ENCODE measurements at regions of chr7 and their contacts with region 1.

Region 1: GRCh38 chr7:150737265-150738055 is at the start of gene GIMAP5:
- DNase-seq: no peak
- ATAC-seq: peak; percentile 56
- total RNA-seq, gene GIMAP5: 9.0 TPM

Region 2: GRCh38 chr7:150675714-150676113 is 61.7 kb before region 1 on chr7:
- intact Hi-C with region 1: loop called (anchors 5 kb)
- DNase-seq: no peak
- ATAC-seq: no peak

Region 3: GRCh38 chr7:150716368-150716767 is 21.1 kb before region 1 on chr7 and contains the start of gene GIMAP1:
- intact Hi-C with region 1: loop called (anchors 2 kb)
- DNase-seq: peak; percentile 70
- ATAC-seq: peak; percentile 82
- total RNA-seq, gene GIMAP1: 5.8 TPM

Region 4: DNA sequence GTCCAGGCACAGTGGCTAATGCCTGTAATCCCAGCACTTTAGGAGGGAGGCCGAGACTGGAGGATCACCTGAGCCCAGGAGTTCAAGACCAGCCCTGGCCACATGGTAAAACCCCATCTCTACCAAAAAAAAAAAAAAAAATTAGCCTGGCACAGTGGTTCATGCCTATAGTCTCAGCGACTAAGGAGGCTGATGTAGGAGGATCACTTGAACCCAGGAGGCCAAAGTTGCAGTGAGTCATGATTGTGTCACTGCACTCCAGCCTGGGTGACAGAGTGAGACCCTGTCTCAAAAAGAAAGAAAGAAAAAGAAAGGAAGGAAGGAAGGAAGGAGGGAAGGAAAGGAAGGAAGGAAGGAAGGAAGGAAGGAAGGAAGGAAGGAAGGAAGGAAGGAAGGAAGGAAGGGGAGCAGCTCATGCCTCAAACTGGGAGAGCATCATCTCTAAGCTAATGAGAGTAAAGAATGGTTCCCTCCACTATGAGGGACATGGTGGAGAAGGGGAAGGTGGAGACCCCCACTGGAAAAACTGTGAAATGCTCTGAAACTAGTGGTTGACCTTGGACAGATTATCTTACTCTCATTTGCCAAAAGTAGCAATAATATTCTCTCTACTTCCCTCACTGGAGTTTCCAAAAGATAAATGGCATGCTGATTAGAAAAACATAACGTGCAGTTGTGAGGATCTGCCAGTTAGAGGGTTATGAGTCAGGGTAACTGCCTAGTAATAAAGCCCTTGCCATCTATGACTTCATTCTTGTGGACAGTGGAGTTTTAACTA is 16.6 kb after region 1 on chr7:
- intact Hi-C with region 1: loop called (anchors 2 kb)
- DNase-seq: no peak
- ATAC-seq: no peak

Measured in Right ventricle myocardium inferior (tissue), 1 donor.